HCT116 (cell line): ENCODE measurements at regions of chr4 and their contacts with region 1.

Region 1: DNA sequence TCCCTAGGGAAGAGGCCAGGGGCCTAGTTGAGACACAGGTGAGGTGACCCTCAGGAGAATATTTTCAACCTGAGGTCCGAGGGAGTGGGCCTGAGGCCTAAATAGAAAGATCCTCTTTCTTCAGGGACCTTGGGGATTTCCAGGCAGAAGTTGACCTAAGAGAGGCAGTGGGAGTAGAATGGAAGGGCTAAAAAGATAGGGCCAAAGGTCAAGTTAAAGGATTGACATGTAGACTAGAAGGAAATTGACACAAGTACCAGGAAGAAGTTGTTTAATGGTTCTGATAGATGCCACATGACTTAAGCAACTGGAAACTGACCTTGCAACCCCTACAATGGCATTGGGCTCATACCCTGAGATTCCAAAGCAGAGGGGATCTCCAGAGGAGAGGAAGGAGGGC is 76.9 kb downstream of the SHROOM3 start:
- DNase-seq: no peak
- ATAC-seq: no peak
- H3K4me3 ChIP-seq: no peak overlapping the region
- H3K27ac ChIP-seq: no peak overlapping the region
- H3K4me1 ChIP-seq: no peaks in the 10 kb centered on the region
- H3K27me3 ChIP-seq: no peaks in the 10 kb centered on the region
- CTCF ChIP-seq: no peak
- POLR2A ChIP-seq: no peak
- RAD21 ChIP-seq: no peak

Region 2: GRCh38 chr4:76733068-76733771 is 221.3 kb after region 1 on chr4:
- CTCF ChIA-PET with region 1: interaction called, 3 read pairs
- POLR2A ChIA-PET with region 1: no interaction called
- RAD21 ChIA-PET with region 1: no interaction called
- intact Hi-C with region 1: loop called (anchors 1 kb)
- DNase-seq: no peak
- ATAC-seq: peak; percentile 82
- H3K4me3 ChIP-seq: no peak overlapping the region
- H3K27ac ChIP-seq: no peak overlapping the region
- H3K4me1 ChIP-seq: peaks cover 0 to 3% of the 10 kb centered on the region in 2 experiments; a peak in 3 of 4 replicates
- H3K27me3 ChIP-seq: no peaks in the 10 kb centered on the region
- CTCF ChIP-seq: peak; percentile 39 to 53 (median 48); a peak in 5 of 6 replicates
- POLR2A ChIP-seq: no peak
- RAD21 ChIP-seq: peak; percentile 81

Region 3: DNA sequence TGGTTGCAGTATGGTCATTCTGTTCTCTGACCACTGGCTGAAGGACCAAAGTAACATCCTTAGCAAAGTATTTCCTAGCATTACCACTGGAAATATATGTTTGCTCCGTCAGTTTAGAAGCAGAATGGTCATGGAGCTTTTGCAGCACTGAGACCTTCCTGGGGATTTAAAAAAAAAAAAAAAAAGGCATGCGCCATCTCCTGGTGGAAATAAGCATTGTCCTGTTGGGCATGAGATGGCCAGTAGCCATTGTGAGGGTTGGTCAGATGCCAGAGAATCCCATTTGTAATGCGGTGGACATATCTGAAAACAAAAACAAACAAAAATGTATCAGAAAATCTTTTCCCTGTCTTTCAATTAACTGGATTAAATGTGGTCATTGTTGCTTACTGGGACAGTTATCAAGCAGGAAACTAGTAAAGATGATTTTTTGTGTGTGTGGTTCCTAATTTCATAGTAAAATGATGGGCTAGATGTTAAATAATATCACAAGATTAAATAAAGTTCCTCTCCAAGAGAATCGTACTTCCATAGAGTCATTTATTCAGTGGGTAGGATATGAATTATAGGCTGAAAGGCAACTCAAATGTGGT is 246.4 kb after region 1 on chr4:
- CTCF ChIA-PET with region 1: interaction called, 6 read pairs
- POLR2A ChIA-PET with region 1: no interaction called
- RAD21 ChIA-PET with region 1: no interaction called
- intact Hi-C with region 1: loop called (anchors 1 kb)
- DNase-seq: peak; percentile 42
- ATAC-seq: peak; percentile 62; the same call in 1 of the 2 replicates
- H3K4me3 ChIP-seq: no peak overlapping the region
- H3K27ac ChIP-seq: no peak overlapping the region
- H3K4me1 ChIP-seq: peaks cover 11 to 13% of the 10 kb centered on the region in 2 experiments
- H3K27me3 ChIP-seq: no peaks in the 10 kb centered on the region
- CTCF ChIP-seq: peak; percentile 58 to 85 (median 69); a peak in 5 of 6 replicates
- POLR2A ChIP-seq: no peak
- RAD21 ChIP-seq: peak; percentile 59

Region 4: GRCh38 chr4:77044461-77045150 is 532.7 kb after region 1 on chr4:
- CTCF ChIA-PET with region 1: no interaction called
- POLR2A ChIA-PET with region 1: no interaction called
- RAD21 ChIA-PET with region 1: no interaction called
- intact Hi-C with region 1: loop called (anchors 1 kb)
- DNase-seq: no peak
- ATAC-seq: peak; percentile 63
- H3K4me3 ChIP-seq: no peak overlapping the region
- H3K27ac ChIP-seq: no peak overlapping the region
- H3K4me1 ChIP-seq: no peaks in the 10 kb centered on the region
- H3K27me3 ChIP-seq: no peaks in the 10 kb centered on the region
- CTCF ChIP-seq: peak; percentile 48 to 80 (median 63); a peak in 5 of 6 replicates
- POLR2A ChIP-seq: no peak
- RAD21 ChIP-seq: peak; percentile 62

Region 5: DNA sequence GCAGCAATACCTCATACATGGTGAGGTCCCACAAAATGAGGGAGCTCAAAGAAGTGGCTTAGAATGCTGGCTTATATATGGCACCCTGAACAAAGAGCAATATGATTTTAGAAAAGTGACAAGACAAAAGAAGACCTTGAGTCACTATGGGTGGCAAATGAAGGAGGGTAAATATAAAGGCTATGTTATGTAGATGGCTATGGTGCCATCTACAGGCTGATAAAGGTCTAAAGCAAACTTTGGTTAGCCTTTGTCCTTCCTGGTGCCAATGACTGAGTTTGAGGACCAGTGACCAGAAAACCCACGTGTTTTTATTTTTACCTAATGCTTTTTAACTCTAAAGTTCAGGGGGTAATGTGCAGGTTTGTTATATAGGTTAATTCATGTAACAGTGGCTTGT is 796.9 kb after region 1 on chr4:
- CTCF ChIA-PET with region 1: no interaction called
- POLR2A ChIA-PET with region 1: no interaction called
- RAD21 ChIA-PET with region 1: no interaction called
- intact Hi-C with region 1: loop called (anchors 5 kb)
- DNase-seq: peak; percentile 10
- ATAC-seq: peak; percentile 97
- H3K4me3 ChIP-seq: no peak overlapping the region
- H3K27ac ChIP-seq: no peak overlapping the region
- H3K4me1 ChIP-seq: no peaks in the 10 kb centered on the region
- H3K27me3 ChIP-seq: peaks cover 23% of the 10 kb centered on the region
- CTCF ChIP-seq: peak; percentile 53 to 62 (median 56); a peak in 4 of 6 replicates
- POLR2A ChIP-seq: no peak
- RAD21 ChIP-seq: peak; percentile 74